Esophagus muscularis mucosa (tissue), 4 donors: ENCODE measurements at regions of chr13 and their contacts with region 1.

Region 1: DNA sequence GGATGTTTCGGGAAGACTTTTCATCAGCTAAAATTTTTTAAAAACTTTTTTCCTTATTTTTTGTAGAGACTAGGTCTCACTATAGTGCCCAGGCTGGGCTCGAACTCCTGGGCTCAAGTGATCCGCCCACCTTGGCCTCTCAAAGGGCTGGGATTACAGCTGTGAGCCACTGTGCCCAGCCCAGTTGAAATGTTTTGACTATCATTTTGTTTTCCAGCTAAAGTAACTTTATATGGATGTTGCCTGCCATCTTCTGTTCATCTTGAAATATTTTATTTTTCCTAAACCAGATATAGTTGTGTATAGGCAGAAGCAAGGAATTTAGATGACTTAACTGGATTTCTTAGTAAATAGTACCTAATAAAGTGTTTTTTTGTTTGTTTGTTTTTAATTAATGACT is 7.0 kb downstream of the CAB39L start:
- DNase-seq: no peak
- H3K4me3 ChIP-seq: no peak overlapping the region
- H3K27ac ChIP-seq: peak overlapping the region in 3 of 4 donors; percentile 32 to 54 (median 45)
- H3K4me1 ChIP-seq: peaks cover 0 to 12% (median 3%) of the 10 kb centered on the region in 4 donors
- H3K27me3 ChIP-seq: no peaks in the 10 kb centered on the region
- CTCF ChIP-seq: peak; percentile 32 to 58 (median 36)
- EP300 ChIP-seq: no peak
- POLR2A ChIP-seq: no peak

Region 2: GRCh38 chr13:49300739-49301589 is 135.9 kb before region 1 on chr13:
- intact Hi-C with region 1: loop called (anchors 1 kb)
- DNase-seq: no peak
- H3K4me3 ChIP-seq: peak overlapping the region; percentile 29 to 51 (median 38)
- H3K27ac ChIP-seq: peak overlapping the region in 2 of 4 donors; percentile 31 to 50
- H3K4me1 ChIP-seq: peaks cover 22 to 56% (median 49%) of the 10 kb centered on the region in 4 donors
- H3K27me3 ChIP-seq: no peaks in the 10 kb centered on the region
- CTCF ChIP-seq: peak; percentile 86 to 94 (median 86)
- EP300 ChIP-seq: no peak
- POLR2A ChIP-seq: no peak